Caco-2 (cell line): ENCODE measurements at regions of chr1 and their contacts with region 1.

Region 1: DNA sequence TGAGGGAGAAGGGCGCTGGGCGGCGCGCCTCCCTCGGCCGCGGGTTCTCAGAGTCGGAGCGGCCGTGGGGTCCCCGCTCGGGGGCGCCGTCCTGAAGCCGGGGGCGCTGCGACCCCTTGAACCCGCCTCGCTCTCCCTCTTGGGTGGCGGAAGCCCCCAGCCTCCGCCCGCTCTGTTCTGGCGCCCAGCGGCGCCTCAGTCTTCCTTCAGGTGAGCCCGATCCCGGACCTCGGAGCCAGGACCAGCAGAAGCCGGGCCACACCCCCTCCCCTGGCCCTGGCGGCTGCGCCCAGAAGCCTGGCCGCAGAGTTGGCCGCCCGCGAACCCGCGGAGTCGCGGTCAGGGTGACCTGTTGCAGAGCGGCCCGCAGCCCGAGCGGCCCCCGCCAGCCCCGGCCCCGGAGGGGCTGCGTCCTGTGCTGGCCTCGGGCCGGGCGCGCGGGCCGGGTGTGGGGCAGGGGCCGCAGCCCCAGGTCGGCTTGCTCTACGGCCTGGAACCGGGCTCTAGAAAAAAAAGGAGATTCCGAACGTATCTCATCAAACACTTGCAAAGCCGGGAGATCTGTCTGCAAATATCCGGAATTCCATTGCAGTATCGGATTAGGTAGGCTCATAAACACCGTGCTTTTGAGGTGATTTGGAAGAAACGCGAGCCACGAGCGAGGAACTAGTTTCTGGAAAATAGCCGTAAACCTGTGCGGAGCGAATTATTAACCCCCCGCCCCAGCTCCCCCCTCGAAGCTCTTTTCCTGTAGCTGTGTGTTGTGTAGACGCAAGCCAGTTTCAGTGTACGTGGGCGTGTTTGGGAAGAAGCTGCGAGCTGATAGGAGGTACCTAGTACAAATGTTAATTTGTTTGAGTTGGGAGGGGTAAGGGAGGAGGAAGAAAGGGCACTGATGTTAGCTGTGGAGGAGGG is 816 bp downstream of the RALGPS2 start:
- DNase-seq: peak; percentile 83 to 93
- H3K4me3 ChIP-seq: peak overlapping the region; percentile 89
- H3K4me3 Mint-ChIP-seq: peak overlapping the region; percentile 89
- H3K27ac Mint-ChIP-seq: peak overlapping the region; percentile 86
- H3K4me1 ChIP-seq: peaks cover 10% of the 10 kb centered on the region; the same call in 1 of the 2 replicates
- H3K4me1 Mint-ChIP-seq: peaks cover 6% of the 10 kb centered on the region
- H3K27me3 ChIP-seq: no peaks in the 10 kb centered on the region
- H3K27me3 Mint-ChIP-seq: no peaks in the 10 kb centered on the region
- CTCF ChIP-seq: no peak

Region 2: GRCh38 chr1:178650934-178651511 is 74.8 kb before region 1 on chr1:
- CTCF ChIA-PET with region 1: no interaction called
- POLR2A ChIA-PET with region 1: interaction called, 12 read pairs
- intact Hi-C with region 1: loop called (anchors 2 kb)
- DNase-seq: peak; percentile 60
- H3K4me3 ChIP-seq: no peak overlapping the region
- H3K4me3 Mint-ChIP-seq: no peak overlapping the region
- H3K27ac Mint-ChIP-seq: peak overlapping the region; percentile 55
- H3K4me1 ChIP-seq: peaks cover 28% of the 10 kb centered on the region
- H3K4me1 Mint-ChIP-seq: peaks cover 28% of the 10 kb centered on the region
- H3K27me3 ChIP-seq: no peaks in the 10 kb centered on the region
- H3K27me3 Mint-ChIP-seq: no peaks in the 10 kb centered on the region
- CTCF ChIP-seq: no peak

Region 3: DNA sequence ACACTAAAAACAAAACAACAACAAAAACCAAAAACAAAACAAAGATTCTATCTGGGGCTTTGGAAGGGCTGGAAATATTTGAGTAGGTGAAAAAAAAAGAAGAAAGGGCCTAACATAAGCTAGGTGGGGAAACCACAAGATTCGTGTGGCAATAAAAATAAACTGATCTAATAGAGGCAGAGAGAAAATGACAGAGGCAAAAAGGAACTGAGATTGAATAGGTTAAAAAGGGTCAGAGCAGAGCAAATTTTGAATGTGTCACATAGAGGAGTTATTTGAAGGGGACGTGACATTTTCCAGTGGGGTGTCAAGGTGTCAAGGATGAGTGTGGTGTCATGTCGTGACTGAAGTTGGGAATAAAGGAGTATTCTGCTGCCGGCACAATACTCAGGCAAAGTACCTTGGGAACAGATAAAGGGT is 66.1 kb before region 1 on chr1:
- CTCF ChIA-PET with region 1: no interaction called
- POLR2A ChIA-PET with region 1: interaction called, 5 read pairs
- intact Hi-C with region 1: loop called (anchors 2 kb)
- DNase-seq: no peak
- H3K4me3 ChIP-seq: no peak overlapping the region
- H3K4me3 Mint-ChIP-seq: no peak overlapping the region
- H3K27ac Mint-ChIP-seq: no peak overlapping the region
- H3K4me1 ChIP-seq: peaks cover 20% of the 10 kb centered on the region
- H3K4me1 Mint-ChIP-seq: peaks cover 11% of the 10 kb centered on the region
- H3K27me3 ChIP-seq: no peaks in the 10 kb centered on the region
- H3K27me3 Mint-ChIP-seq: no peaks in the 10 kb centered on the region
- CTCF ChIP-seq: no peak

Region 4: DNA sequence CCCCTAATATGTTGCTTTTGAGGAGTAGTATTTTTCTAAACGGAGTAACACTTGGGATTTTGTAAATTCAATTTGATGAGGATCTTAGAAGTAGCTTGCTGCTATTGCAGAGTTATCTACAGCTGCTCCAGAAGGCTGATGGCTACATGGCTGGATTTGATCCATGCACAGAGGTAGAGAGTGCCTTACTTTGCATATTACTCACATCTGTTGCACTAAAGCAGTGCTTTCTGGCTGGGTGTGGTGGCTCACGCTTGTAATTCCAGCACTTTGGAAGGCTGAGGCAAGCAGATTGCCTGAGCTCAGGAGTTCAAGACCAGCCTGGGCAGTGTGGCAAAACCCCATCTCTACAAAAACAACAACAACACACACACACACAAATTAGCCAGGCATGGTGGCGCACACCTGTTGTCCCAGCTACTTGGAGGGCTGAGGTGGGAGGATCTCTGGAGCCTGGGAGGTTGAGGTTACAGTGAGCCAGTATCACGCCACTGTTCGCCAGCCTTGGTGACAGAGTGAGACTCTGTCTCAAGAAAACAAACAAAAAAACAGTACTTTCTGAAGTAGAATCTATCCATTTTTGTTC is 23.8 kb after region 1 on chr1:
- CTCF ChIA-PET with region 1: interaction called, 3 read pairs
- POLR2A ChIA-PET with region 1: interaction called, 12 read pairs
- intact Hi-C with region 1: no loop called
- DNase-seq: no peak
- H3K4me3 ChIP-seq: no peak overlapping the region
- H3K4me3 Mint-ChIP-seq: no peak overlapping the region
- H3K27ac Mint-ChIP-seq: no peak overlapping the region
- H3K4me1 ChIP-seq: no peaks in the 10 kb centered on the region
- H3K4me1 Mint-ChIP-seq: no peaks in the 10 kb centered on the region
- H3K27me3 ChIP-seq: no peaks in the 10 kb centered on the region
- H3K27me3 Mint-ChIP-seq: no peaks in the 10 kb centered on the region
- CTCF ChIP-seq: no peak

Region 5: GRCh38 chr1:178942285-178943198 is 216.7 kb after region 1 on chr1:
- CTCF ChIA-PET with region 1: no interaction called
- POLR2A ChIA-PET with region 1: no interaction called
- intact Hi-C with region 1: no loop called
- DNase-seq: no peak
- H3K4me3 ChIP-seq: no peak overlapping the region
- H3K4me3 Mint-ChIP-seq: no peak overlapping the region
- H3K27ac Mint-ChIP-seq: no peak overlapping the region
- H3K4me1 ChIP-seq: no peaks in the 10 kb centered on the region
- H3K4me1 Mint-ChIP-seq: no peaks in the 10 kb centered on the region
- H3K27me3 ChIP-seq: no peaks in the 10 kb centered on the region
- H3K27me3 Mint-ChIP-seq: no peaks in the 10 kb centered on the region
- CTCF ChIP-seq: no peak

Region 6: GRCh38 chr1:179002552-179003345 is 276.9 kb after region 1 on chr1:
- CTCF ChIA-PET with region 1: interaction called, 10 read pairs
- POLR2A ChIA-PET with region 1: interaction called, 5 read pairs
- intact Hi-C with region 1: no loop called
- DNase-seq: peak; percentile 83 to 86
- H3K4me3 ChIP-seq: no peak overlapping the region
- H3K4me3 Mint-ChIP-seq: peak overlapping the region; percentile 28
- H3K27ac Mint-ChIP-seq: peak overlapping the region; percentile 77
- H3K4me1 ChIP-seq: peaks cover 9% of the 10 kb centered on the region
- H3K4me1 Mint-ChIP-seq: peaks cover 7% of the 10 kb centered on the region
- H3K27me3 ChIP-seq: no peaks in the 10 kb centered on the region
- H3K27me3 Mint-ChIP-seq: no peaks in the 10 kb centered on the region
- CTCF ChIP-seq: peak; percentile 95 to 98